PC-3 (cell line): ENCODE measurements at regions of chr2 and their contacts with region 1.

Region 1: DNA sequence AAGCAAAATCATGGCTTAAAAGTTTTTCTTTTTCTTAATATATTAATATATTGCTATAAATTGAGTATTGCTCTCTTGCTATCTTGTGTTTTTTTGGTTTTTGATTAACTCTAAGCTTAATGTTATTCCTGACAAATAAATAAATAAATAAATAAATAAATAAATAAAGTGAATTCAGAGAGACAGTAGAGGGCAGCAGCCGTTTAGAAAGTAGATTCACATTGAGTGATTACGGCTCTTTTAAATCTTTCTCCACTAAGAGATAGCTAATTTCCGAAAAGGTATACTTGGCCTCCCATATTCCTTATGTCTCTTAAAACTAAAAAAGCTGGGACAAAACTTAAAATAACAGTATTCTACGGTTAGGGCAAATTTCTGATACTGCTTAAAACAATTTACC is 34.3 kb downstream of the MSH2 start:
- DNase-seq: peak; percentile 42
- ATAC-seq: peak; percentile 22; the same call in 1 of the 2 replicates
- H3K4me3 ChIP-seq: no peak overlapping the region
- H3K27ac ChIP-seq: no peak overlapping the region
- H3K4me1 ChIP-seq: no peaks in the 10 kb centered on the region
- H3K27me3 ChIP-seq: no peaks in the 10 kb centered on the region
- CTCF ChIP-seq: peak; percentile 42

Region 2: GRCh38 chr2:47189635-47190034 is 247.7 kb before region 1 on chr2:
- CTCF ChIA-PET with region 1: no interaction called
- POLR2A ChIA-PET with region 1: no interaction called
- intact Hi-C with region 1: no loop called
- DNase-seq: peak; percentile 95
- ATAC-seq: peak; percentile 39
- H3K4me3 ChIP-seq: peak overlapping the region; percentile 15; the same call in 1 of the 2 replicates
- H3K27ac ChIP-seq: peak overlapping the region; percentile 83
- H3K4me1 ChIP-seq: peaks cover 56% of the 10 kb centered on the region
- H3K27me3 ChIP-seq: no peaks in the 10 kb centered on the region
- CTCF ChIP-seq: no peak

Region 3: DNA sequence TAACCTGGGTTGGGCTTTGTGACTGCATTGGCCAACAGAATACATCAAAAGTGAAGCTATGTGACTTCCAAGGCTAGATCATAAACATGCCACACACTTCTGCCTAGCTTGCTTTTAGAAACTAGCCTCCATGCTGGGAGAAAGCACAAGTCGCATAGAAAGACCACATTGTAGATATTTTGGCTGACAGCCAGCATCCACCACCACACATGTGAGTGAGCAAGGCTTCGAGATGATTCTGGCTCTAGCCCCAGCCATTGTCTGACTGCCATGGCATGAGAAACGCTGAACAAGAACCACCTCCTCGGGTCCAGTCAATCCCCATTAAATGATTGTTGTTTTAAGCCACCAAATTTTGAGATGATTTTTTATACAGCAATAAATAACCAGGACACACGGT is 215.3 kb before region 1 on chr2:
- CTCF ChIA-PET with region 1: no interaction called
- POLR2A ChIA-PET with region 1: no interaction called
- intact Hi-C with region 1: no loop called
- DNase-seq: no peak
- ATAC-seq: no peak
- H3K4me3 ChIP-seq: no peak overlapping the region
- H3K27ac ChIP-seq: no peak overlapping the region
- H3K4me1 ChIP-seq: peaks cover 13% of the 10 kb centered on the region
- H3K27me3 ChIP-seq: no peaks in the 10 kb centered on the region
- CTCF ChIP-seq: no peak

Region 4: DNA sequence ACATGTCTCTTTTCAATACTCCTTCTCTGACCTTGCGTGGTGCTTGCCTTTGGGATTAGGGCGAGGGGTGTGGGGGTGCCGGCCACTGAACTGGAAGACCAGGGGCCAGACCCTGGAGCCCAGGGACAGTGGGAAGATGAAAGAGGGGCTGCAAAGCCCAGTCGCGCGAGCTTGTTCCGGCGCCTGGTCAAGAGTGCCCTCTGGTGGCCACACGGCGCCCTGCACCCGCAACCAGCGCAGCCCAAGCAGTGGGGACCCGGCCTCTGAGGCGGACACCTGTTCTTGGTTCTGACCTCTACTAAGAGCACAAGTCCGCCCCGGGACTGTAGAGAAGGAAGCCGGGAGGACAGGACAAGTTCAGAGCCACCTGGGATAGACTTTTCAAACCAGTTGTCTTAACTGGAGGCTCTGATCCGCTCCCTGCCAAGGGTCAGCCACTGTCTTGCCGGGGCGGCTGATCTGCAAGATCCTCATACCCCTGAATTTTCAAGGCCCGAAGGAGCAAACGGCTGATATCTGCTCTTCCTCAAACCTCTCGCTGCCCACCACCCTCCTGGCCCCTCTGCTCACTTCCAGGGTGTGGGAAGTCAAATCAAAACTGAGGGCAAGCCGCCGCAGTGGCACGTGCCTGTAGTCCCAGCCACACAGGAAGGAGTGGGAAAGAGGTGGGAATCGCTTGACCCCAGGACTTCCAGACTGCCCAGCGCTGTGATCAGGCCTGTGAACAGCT is 330.8 kb after region 1 on chr2:
- CTCF ChIA-PET with region 1: interaction called, 20 read pairs
- POLR2A ChIA-PET with region 1: interaction called, 7 read pairs
- intact Hi-C with region 1: loop called (anchors 2 kb)
- DNase-seq: peak; percentile 66
- ATAC-seq: peak; percentile 77
- H3K4me3 ChIP-seq: peak overlapping the region; percentile 26; the same call in 1 of the 2 replicates
- H3K27ac ChIP-seq: no peak overlapping the region
- H3K4me1 ChIP-seq: no peaks in the 10 kb centered on the region
- H3K27me3 ChIP-seq: no peaks in the 10 kb centered on the region
- CTCF ChIP-seq: peak; percentile 97